ENCODE measurements at regions of chr21 and their contacts with region 1.

Region 1: GRCh38 chr21:29024474-29025327 is at the start of gene USP16:
- DNase-seq: peak; percentile 99
- H3K4me3 ChIP-seq: peak within 1 kb of the TSS; percentile 66 to 83 (median 74)
- H3K27ac ChIP-seq: peak within 1 kb of the TSS; percentile 93 to 99 (median 96)
- H3K4me1 ChIP-seq: peaks cover 17 to 45% (median 30%) of the 10 kb centered on the region in 4 donors
- H3K27me3 ChIP-seq: no peaks in the 10 kb centered on the region
- CTCF ChIP-seq: peak in 2 of 3 experiments; percentile 5 to 26
- EP300 ChIP-seq: no peak
- POLR2A ChIP-seq: no peak
- total RNA-seq, gene USP16: 31.3 to 47.8 (median 38.7) TPM

Region 2: GRCh38 chr21:28922368-28922767 is 102.3 kb before region 1 on chr21:
- intact Hi-C with region 1: no loop called
- DNase-seq: no peak
- H3K4me3 ChIP-seq: no peak overlapping the region
- H3K27ac ChIP-seq: no peak overlapping the region
- H3K4me1 ChIP-seq: no peaks in the 10 kb centered on the region
- H3K27me3 ChIP-seq: no peaks in the 10 kb centered on the region
- CTCF ChIP-seq: no peak
- EP300 ChIP-seq: no peak
- POLR2A ChIP-seq: no peak

Region 3: DNA sequence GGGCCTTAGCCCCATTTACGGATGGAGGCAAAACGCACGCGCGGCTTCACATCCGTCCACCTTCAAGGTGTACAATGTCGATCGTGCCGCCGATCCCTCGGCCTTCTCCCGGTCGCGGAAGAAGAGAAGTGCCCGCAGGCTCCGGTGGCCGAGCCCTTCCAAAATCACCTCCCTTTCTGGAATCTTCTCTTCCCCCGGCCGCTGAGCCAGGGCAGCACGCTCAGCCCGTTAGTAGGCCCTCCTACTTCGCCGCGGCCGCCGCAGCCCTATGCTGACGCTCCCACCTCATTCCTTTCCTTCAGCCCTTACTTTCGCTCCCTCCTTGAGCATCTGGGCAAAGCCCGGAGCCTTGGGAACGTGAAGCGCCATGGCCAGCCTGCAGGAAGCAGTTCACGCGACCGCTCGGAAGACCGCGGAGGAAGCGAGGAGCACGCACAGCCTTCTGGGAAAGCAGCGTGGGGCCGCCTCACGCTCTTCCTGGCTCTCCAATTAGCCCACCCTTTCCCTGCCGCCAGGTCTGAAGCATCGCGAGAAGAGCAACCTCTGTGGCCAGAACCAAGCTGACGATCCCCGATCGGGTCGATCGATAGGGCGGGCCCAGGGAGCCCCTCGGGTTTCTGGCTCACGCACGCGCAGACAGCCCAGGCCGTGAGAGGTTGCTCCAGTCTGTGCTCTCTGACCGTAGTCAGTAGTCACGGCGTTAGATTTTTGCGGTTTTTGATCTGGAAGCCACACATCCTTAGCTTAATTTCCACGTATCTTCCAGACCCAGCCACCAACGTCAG is 48.7 kb after region 1 on chr21 and contains the start of gene CCT8:
- intact Hi-C with region 1: loop called (anchors 5 kb)
- DNase-seq: peak; percentile 98
- H3K4me3 ChIP-seq: peak within 1 kb of the TSS; percentile 71 to 96 (median 80)
- H3K27ac ChIP-seq: peak within 1 kb of the TSS; percentile 84 to 94 (median 90)
- H3K4me1 ChIP-seq: peaks cover 19 to 52% (median 44%) of the 10 kb centered on the region in 4 donors
- H3K27me3 ChIP-seq: no peaks in the 10 kb centered on the region
- CTCF ChIP-seq: no peak
- EP300 ChIP-seq: no peak
- POLR2A ChIP-seq: peak; percentile 27
- total RNA-seq, gene CCT8: 73.9 to 104 (median 85.4) TPM